ENCODE measurements at regions of chr6 and their contacts with region 1.

Region 1: GRCh38 chr6:83215131-83216047 is 22.2 kb downstream of the RWDD2A start:
- DNase-seq: peak; percentile 92
- H3K4me3 ChIP-seq: no peak overlapping the region
- H3K27ac ChIP-seq: peak overlapping the region; percentile 53
- H3K4me1 ChIP-seq: peaks cover 36% of the 10 kb centered on the region
- H3K27me3 ChIP-seq: no peaks in the 10 kb centered on the region
- CTCF ChIP-seq: peak; percentile 93

Region 2: DNA sequence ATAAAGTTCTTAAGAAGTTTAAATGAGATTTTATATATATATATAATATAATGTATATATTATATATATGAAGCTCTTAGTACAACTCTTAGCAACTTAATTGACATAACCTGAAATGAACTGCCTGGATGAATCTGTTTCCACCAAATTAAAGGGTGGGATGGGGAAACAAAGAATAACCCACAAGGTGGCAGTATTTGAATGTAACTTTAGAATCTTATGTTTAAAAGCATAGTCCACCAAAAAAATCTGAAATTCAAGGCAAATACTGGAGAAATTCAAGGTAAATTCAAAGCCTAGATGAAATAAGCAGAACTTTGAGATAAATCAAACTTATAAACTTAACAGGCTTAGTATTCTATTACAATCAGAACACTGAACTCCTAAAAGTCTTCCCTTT is 963.4 kb before region 1 on chr6:
- CTCF ChIA-PET with region 1: no interaction called
- POLR2A ChIA-PET with region 1: no interaction called
- intact Hi-C with region 1: loop called (anchors 10 kb)
- DNase-seq: peak; percentile 79
- H3K4me3 ChIP-seq: no peak overlapping the region
- H3K27ac ChIP-seq: no peak overlapping the region
- H3K4me1 ChIP-seq: peaks cover 19% of the 10 kb centered on the region
- H3K27me3 ChIP-seq: no peaks in the 10 kb centered on the region
- CTCF ChIP-seq: peak; percentile 60